Naive thymus-derived CD4-positive, alpha-beta T cell (primary cell): ENCODE measurements at regions of chr1 and their contacts with region 1.

Region 1: GRCh38 chr1:223363856-223364684 is at the start of gene SUSD4:
- DNase-seq: peak; percentile 54 to 87 (median 81)
- ATAC-seq: peak; percentile 92
- H3K4me3 ChIP-seq: peak within 1 kb of the TSS; percentile 83
- H3K4me3 Mint-ChIP-seq: peak within 1 kb of the TSS; percentile 83 to 96 (median 94)
- H3K27ac ChIP-seq: peak within 1 kb of the TSS; percentile 44
- H3K27ac Mint-ChIP-seq: peak within 1 kb of the TSS in 8 of 9 donors; percentile 61 to 91 (median 72)
- H3K4me1 ChIP-seq: no peaks in the 10 kb centered on the region
- H3K4me1 Mint-ChIP-seq: peaks cover 7 to 29% (median 27%) of the 10 kb centered on the region in 7 donors
- H3K27me3 ChIP-seq: no peaks in the 10 kb centered on the region
- H3K27me3 Mint-ChIP-seq: peaks cover 0 to 68% (median 0%) of the 10 kb centered on the region in 5 donors
- total RNA-seq, gene SUSD4: 0.10 to 20.3 (median 7.1) TPM

Region 2: DNA sequence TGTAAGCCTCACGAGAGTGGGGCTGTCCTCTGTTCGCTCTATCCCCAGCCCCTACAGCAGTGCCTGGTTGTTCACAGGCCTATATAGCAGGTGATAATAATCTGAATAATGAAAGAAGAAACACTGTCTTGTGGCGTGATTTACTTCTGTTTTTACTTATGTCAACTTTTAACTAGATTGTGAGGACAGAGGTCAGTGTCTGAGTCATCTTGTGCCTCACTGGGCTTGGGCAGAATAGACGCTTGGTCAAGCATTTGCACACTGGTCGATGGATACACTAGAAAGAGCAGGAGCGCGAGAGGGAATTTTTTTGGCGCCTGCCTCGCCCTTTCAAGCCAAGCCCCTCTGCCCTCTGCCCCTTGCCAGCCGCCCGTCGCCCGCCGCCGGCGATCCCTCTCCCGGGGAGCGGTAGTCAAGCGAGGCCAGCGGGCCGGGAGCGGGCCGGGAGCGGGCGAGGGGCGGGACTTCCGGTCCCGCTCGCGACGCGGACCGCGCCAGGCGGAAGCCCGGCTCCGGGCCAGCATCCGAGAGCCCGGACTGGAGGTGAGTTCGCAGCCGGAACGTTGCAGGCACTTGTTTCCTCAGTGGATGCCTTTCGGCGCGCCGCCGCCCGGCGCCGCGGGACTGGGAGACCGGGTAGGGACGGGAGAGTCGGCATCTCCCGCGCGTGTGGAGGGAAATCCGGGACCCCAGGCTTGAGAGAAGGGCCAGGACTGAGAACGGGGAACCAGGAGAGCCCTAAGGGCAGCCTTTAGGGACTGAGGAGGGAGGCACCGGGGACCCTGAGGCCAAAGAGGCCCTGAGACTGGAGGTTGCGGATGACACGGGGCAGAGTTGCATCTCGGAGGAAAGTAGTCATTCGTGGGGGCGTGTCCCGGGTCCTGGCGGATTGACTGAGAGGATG is 549.3 kb before region 1 on chr1 and contains the start of gene DISP1:
- CTCF ChIA-PET with region 1: no interaction called
- POLR2A ChIA-PET with region 1: no interaction called
- intact Hi-C with region 1: loop called in 1 of 2 experiments (anchors 1 kb)
- DNase-seq: peak; percentile 46 to 71 (median 60)
- ATAC-seq: peak; percentile 90
- H3K4me3 ChIP-seq: peak within 1 kb of the TSS; percentile 77
- H3K4me3 Mint-ChIP-seq: peak within 1 kb of the TSS; percentile 87 to 97 (median 95)
- H3K27ac ChIP-seq: peak within 1 kb of the TSS; percentile 78
- H3K27ac Mint-ChIP-seq: peak within 1 kb of the TSS; percentile 79 to 96 (median 89)
- H3K4me1 ChIP-seq: no peaks in the 10 kb centered on the region
- H3K4me1 Mint-ChIP-seq: peaks cover 17 to 37% (median 29%) of the 10 kb centered on the region in 7 donors
- H3K27me3 ChIP-seq: no peaks in the 10 kb centered on the region
- H3K27me3 Mint-ChIP-seq: peaks cover 0 to 13% (median 0%) of the 10 kb centered on the region in 5 donors
- total RNA-seq, gene DISP1: 1.7 to 4.6 (median 3.0) TPM

Region 3: GRCh38 chr1:223133824-223134435 is 230.1 kb before region 1 on chr1:
- CTCF ChIA-PET with region 1: interaction called, 79 read pairs
- POLR2A ChIA-PET with region 1: interaction called, 3 read pairs
- intact Hi-C with region 1: no loop called
- DNase-seq: peak; percentile 59 to 84 (median 73)
- ATAC-seq: peak; percentile 92
- H3K4me3 ChIP-seq: peak overlapping the region; percentile 41
- H3K4me3 Mint-ChIP-seq: peak overlapping the region; percentile 51 to 84 (median 74)
- H3K27ac ChIP-seq: no peak overlapping the region
- H3K27ac Mint-ChIP-seq: peak overlapping the region in 1 of 9 donors; percentile 41
- H3K4me1 ChIP-seq: peaks cover 4 to 12% of the 10 kb centered on the region in 2 donors
- H3K4me1 Mint-ChIP-seq: peaks cover 13 to 31% (median 22%) of the 10 kb centered on the region in 7 donors
- H3K27me3 ChIP-seq: no peaks in the 10 kb centered on the region
- H3K27me3 Mint-ChIP-seq: peaks cover 0 to 68% (median 5%) of the 10 kb centered on the region in 5 donors

Region 4: GRCh38 chr1:223142795-223143536 is 221.1 kb before region 1 on chr1 and contains the start of gene TLR5:
- CTCF ChIA-PET with region 1: interaction called, 7 read pairs
- POLR2A ChIA-PET with region 1: interaction called, 5 read pairs
- intact Hi-C with region 1: loop called (anchors 1 to 5 kb)
- DNase-seq: peak; percentile 81 to 92 (median 87)
- ATAC-seq: peak; percentile 94
- H3K4me3 ChIP-seq: peak within 1 kb of the TSS; percentile 65
- H3K4me3 Mint-ChIP-seq: peak within 1 kb of the TSS; percentile 69 to 89 (median 81)
- H3K27ac ChIP-seq: peak within 1 kb of the TSS; percentile 69
- H3K27ac Mint-ChIP-seq: peak within 1 kb of the TSS in 8 of 9 donors; percentile 48 to 95 (median 90)
- H3K4me1 ChIP-seq: peaks cover 13 to 15% of the 10 kb centered on the region in 2 donors
- H3K4me1 Mint-ChIP-seq: peaks cover 13 to 35% (median 27%) of the 10 kb centered on the region in 7 donors
- H3K27me3 ChIP-seq: no peaks in the 10 kb centered on the region
- H3K27me3 Mint-ChIP-seq: peaks cover 0 to 10% (median 0%) of the 10 kb centered on the region in 5 donors
- total RNA-seq, gene TLR5: 3.1 to 8.0 (median 6.6) TPM in 4 of 5 experiments, not detected in the other

Region 5: GRCh38 chr1:223233410-223234169 is 130.5 kb before region 1 on chr1:
- CTCF ChIA-PET with region 1: no interaction called
- POLR2A ChIA-PET with region 1: interaction called, 5 read pairs
- intact Hi-C with region 1: loop called in 1 of 2 experiments (anchors 5 kb)
- DNase-seq: peak in 1 of 9 donors; percentile 18
- ATAC-seq: no peak
- H3K4me3 ChIP-seq: no peak overlapping the region
- H3K4me3 Mint-ChIP-seq: peak overlapping the region in 5 of 10 donors; percentile 4 to 58 (median 24)
- H3K27ac ChIP-seq: peak overlapping the region; percentile 27
- H3K27ac Mint-ChIP-seq: peak overlapping the region in 8 of 9 donors; percentile 19 to 99 (median 80)
- H3K4me1 ChIP-seq: peaks cover 8 to 64% of the 10 kb centered on the region in 2 donors
- H3K4me1 Mint-ChIP-seq: peaks cover 18 to 82% (median 74%) of the 10 kb centered on the region in 7 donors
- H3K27me3 ChIP-seq: no peaks in the 10 kb centered on the region
- H3K27me3 Mint-ChIP-seq: peaks cover 0 to 4% (median 0%) of the 10 kb centered on the region in 5 donors

Region 6: GRCh38 chr1:223515926-223516325 is 151.9 kb after region 1 on chr1:
- CTCF ChIA-PET with region 1: interaction called, 4 read pairs
- POLR2A ChIA-PET with region 1: interaction called, 3 read pairs
- intact Hi-C with region 1: loop called in 1 of 2 experiments (anchors 1 kb)
- DNase-seq: no peak
- ATAC-seq: peak; percentile 13
- H3K4me3 ChIP-seq: peak overlapping the region; percentile 27
- H3K4me3 Mint-ChIP-seq: peak overlapping the region; percentile 41 to 87 (median 59)
- H3K27ac ChIP-seq: peak overlapping the region; percentile 55
- H3K27ac Mint-ChIP-seq: peak overlapping the region; percentile 79 to 96 (median 91)
- H3K4me1 ChIP-seq: peaks cover 18 to 44% of the 10 kb centered on the region in 2 donors
- H3K4me1 Mint-ChIP-seq: peaks cover 26 to 58% (median 40%) of the 10 kb centered on the region in 7 donors
- H3K27me3 ChIP-seq: no peaks in the 10 kb centered on the region
- H3K27me3 Mint-ChIP-seq: no peaks in the 10 kb centered on the region